Right cardiac atrium (tissue), 5 donors: ENCODE measurements at regions of chr1 and their contacts with region 1.

Region 1: DNA sequence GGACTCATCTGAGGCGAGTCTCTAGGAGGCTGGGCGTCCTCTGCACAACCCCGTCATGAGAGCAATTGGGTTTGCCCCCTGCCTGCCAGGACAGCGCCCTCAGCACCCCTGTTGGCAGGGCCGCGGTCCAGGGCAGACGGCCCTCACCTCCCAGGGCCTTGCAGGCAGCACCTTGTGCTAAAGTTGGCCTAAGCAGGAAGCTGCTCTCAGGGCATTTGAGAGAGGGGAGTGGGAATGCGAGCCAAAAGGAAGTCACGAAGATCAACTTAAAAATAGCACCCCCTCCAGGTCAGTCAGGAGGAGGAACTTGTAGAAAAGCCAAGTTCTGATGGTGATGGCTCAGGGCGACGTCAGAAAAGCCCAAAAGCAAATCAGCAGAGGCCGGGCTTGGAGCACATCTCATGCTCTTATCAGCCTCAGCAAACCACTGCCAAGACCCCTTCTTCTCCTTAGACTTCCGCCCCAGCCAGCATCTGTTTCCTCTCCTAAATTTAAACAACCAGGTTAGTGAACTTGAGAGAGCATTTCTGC is 12.6 kb upstream of the ADORA3 start:
- DNase-seq: peak; percentile 83 to 91 (median 86)
- ATAC-seq: peak; percentile 80 to 87
- H3K4me3 ChIP-seq: peak overlapping the region; percentile 3
- H3K27ac ChIP-seq: peak overlapping the region; percentile 55
- H3K4me1 ChIP-seq: peaks cover 21% of the 10 kb centered on the region
- H3K27me3 ChIP-seq: no peaks in the 10 kb centered on the region

Region 2: GRCh38 chr1:111369177-111369576 is 146.9 kb before region 1 on chr1:
- intact Hi-C with region 1: no loop called
- DNase-seq: no peak
- ATAC-seq: no peak
- H3K4me3 ChIP-seq: no peak overlapping the region
- H3K27ac ChIP-seq: no peak overlapping the region
- H3K4me1 ChIP-seq: no peaks in the 10 kb centered on the region
- H3K27me3 ChIP-seq: no peaks in the 10 kb centered on the region

Region 3: DNA sequence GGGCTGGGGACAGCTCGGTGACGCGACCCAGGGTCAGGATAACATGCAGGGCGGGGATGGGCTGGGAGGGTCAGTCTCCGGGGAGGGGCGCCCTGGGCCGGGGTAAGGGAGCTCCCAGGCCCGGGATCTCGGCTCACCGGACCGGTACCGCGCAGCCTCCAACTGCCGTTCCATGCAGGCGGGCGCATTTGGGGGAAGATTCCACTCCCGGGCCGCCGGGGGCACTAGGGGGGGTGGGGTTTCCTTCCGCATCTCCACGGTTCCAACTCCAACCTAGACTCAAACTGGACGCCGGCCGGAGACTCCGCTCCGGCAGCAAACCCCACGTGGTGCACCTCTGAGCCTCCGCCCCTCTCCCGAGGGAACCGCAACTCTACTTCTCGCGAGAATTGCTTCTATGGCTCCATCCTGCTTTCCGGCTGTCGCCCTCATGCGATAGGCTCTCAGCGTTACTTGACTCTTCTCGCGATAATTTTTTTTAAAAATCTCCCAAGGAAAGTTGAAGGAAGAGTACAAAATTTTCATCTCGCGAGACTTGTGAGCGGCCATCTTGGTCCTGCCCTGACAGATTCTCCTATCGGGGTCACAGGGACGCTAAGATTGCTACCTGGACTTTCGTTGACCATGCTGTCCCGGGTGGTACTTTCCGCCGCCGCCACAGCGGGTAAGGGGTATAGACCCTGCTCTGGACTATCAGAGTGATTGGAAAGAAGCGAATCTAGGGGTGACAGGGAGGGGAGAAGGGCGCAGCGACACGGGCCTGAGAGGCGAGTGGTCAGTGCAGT is 67.0 kb before region 1 on chr1 and contains the starts of genes ATP5PB and WDR77:
- intact Hi-C with region 1: no loop called
- DNase-seq: peak; percentile 94 to 97 (median 96)
- ATAC-seq: peak; percentile 96
- H3K4me3 ChIP-seq: peak within 1 kb of the TSS; percentile 94
- H3K27ac ChIP-seq: peak within 1 kb of the TSS; percentile 99
- H3K4me1 ChIP-seq: no peaks in the 10 kb centered on the region
- H3K27me3 ChIP-seq: no peaks in the 10 kb centered on the region
- total RNA-seq, gene ATP5PB: 433 to 505 (median 493) TPM
- total RNA-seq, gene WDR77: 24.1 to 29.2 (median 27.9) TPM

Region 4: GRCh38 chr1:111592389-111593361 is 76.6 kb after region 1 on chr1:
- intact Hi-C with region 1: loop called in 1 of 4 experiments (anchors 5 kb)
- DNase-seq: peak; percentile 91 to 95 (median 94)
- ATAC-seq: peak; percentile 96
- H3K4me3 ChIP-seq: no peak overlapping the region
- H3K27ac ChIP-seq: peak overlapping the region; percentile 99
- H3K4me1 ChIP-seq: peaks cover 4% of the 10 kb centered on the region
- H3K27me3 ChIP-seq: no peaks in the 10 kb centered on the region

Region 5: DNA sequence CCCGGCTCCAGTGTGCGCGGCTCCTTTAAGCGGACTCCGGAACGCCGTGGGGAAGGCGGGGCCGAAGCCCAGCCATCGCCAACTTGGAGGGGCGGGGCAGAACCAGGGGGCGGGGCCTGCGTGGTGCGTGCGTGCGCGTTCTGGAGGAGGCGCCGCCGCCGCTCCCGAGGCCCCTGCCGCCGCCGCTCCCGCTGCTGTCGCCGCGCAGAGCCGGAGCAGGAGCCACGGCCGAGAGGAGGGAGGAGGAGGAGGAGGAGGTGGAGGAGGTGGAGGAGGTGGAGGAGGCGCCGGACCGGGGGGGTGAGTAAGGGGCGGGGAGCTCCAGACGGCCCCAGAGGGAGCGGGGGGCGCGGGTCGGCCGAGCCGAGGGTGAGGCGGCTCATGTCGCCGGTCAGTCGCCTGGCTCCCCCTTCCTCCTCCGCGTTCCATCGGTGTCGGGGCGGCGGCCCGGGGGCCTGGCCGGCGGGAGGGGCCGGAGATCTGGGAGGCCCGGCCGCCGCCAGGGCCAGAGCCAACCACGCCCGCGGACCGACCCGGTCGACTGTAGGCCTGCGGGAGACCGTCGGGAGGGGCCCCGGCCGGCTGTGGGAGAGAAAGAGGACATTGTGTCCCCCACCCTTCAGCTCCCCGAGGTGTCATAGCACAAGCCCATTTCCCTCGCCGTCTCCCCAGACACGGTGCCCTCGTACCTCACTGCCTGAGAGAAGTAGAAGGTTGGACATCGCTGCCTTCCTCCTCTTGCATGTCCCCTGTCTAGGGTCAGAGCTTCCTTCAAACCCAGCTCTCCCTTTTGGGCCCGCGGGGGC is 103.8 kb after region 1 on chr1 and contains the start of gene RAP1A:
- intact Hi-C with region 1: loop called in 2 of 4 experiments (anchors 5 to 10 kb)
- DNase-seq: peak; percentile 95 to 99 (median 98)
- ATAC-seq: peak; percentile 97 to 98
- H3K4me3 ChIP-seq: peak within 1 kb of the TSS; percentile 93
- H3K27ac ChIP-seq: peak within 1 kb of the TSS; percentile 92
- H3K4me1 ChIP-seq: peaks cover 11% of the 10 kb centered on the region
- H3K27me3 ChIP-seq: no peaks in the 10 kb centered on the region
- total RNA-seq, gene RAP1A: 104 to 128 (median 111) TPM

Region 6: DNA sequence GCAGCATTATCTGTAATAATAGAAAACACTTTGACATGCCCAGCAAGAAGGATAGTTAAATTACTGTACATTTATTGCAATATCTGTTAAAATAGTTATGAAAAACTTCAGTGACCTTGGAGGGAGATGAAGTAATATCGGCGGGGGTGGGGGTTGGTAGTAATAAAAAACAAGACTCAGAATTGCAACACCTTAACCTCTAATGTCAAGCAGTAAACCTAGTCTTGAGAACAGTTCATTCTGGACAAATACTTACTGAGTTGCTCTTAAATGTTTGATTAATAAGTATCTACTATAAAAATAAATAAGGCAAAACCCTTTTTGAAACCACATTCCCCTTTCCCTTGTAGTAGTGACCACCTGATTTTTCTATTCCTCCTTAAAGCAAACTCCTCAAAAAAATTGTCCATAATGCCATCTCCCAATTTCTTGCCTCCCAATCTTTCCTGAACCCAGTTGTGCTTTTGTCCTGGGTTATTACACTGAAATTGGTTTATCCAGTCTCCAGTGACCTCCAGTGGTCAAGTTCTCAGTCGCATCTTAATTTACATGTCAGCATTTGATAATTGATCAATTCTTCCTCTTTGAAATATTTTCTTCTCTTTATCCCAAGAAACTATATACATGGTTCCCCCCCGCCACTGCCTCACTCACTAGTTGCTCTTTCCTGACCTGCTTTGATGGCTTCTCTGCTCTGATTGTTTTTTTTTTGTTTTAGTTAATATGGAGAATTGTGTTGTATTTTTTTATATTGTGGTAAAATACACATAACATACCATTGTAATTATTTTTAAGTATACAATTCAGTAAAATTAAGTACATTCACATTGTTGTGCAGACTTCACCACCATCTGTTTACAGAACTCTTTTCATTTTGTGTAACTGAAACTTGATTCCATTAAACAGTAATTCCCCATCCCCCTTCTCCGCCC is 140.3 kb after region 1 on chr1:
- intact Hi-C with region 1: loop called in 1 of 4 experiments (anchors 5 kb)
- DNase-seq: no peak
- ATAC-seq: peak; percentile 60 to 72
- H3K4me3 ChIP-seq: no peak overlapping the region
- H3K27ac ChIP-seq: no peak overlapping the region
- H3K4me1 ChIP-seq: peaks cover 3% of the 10 kb centered on the region
- H3K27me3 ChIP-seq: no peaks in the 10 kb centered on the region